Activated CD4-positive, alpha-beta T cell treated with anti-CD3 and anti-CD28 coated beads, Interleukin-2, amount 10 ng/mL, durations not matched to agents 7 days and 5 days (primary cell): ENCODE measurements at regions of chr16 and their contacts with region 1.

Region 1: GRCh38 chr16:17728196-17728595 is 257.4 kb upstream of the XYLT1 start:
- DNase-seq: no peak
- H3K4me3 Mint-ChIP-seq: no peak overlapping the region
- H3K27ac Mint-ChIP-seq: no peak overlapping the region
- H3K4me1 Mint-ChIP-seq: no peaks in the 10 kb centered on the region
- H3K27me3 Mint-ChIP-seq: no peaks in the 10 kb centered on the region

Region 2: DNA sequence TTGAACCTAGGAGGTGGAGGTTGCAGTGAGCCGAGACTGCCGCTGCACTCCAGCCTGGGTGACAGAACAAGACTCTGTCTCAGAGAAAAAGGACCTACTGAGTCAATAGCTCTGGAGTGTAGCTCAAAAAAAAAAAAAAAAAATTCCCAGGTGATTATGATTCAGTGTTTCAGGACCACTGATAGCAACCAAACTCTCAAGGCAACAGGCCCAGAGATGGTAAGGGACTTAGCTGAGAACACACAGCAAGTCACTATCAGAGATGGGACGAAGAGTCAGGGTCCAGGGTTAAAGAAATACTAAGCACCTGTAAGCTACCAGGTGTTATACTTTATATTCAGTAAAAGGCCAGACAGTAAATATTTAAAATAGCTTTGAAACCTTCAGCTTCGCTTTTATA is 592.8 kb before region 1 on chr16:
- CTCF ChIA-PET with region 1: no interaction called
- POLR2A ChIA-PET with region 1: interaction called, 16 read pairs
- DNase-seq: no peak
- H3K4me3 Mint-ChIP-seq: no peak overlapping the region
- H3K27ac Mint-ChIP-seq: no peak overlapping the region
- H3K4me1 Mint-ChIP-seq: peaks cover 12% of the 10 kb centered on the region
- H3K27me3 Mint-ChIP-seq: no peaks in the 10 kb centered on the region

Region 3: DNA sequence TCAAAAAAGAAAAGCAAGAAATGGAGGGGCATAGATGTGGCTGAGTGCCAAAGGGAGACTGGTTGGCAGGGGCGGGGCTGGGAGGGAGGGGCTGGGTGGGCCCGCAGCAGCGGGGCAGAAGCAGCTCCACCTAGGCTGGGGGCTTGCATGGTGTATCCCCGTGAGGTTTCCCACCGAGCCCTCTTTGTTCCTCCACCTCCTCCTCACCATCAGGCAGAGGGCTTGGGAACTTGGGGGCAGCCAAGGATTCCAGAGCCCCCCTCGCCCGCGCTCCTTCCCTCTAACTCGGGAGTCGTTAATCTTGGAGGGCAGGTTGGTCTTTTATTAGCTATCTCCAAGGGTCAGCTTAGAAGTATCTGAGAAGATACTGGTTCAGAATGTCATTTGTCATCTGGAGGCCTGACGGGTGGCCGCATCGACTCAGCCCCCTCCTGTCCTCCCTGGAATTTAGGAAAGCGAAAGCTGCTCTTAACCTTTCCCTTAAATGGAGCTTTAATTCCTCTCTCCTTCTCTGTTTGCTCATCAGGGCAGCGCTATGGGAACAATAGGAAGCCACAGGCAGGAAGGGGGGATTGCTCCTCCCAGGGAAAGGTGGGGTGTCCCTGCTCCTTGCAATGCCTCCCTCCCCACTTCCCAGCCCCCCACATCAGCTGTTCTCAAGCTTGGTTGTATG is 16.8 kb after region 1 on chr16:
- CTCF ChIA-PET with region 1: no interaction called
- POLR2A ChIA-PET with region 1: no interaction called
- DNase-seq: no peak
- H3K4me3 Mint-ChIP-seq: no peak overlapping the region
- H3K27ac Mint-ChIP-seq: no peak overlapping the region
- H3K4me1 Mint-ChIP-seq: no peaks in the 10 kb centered on the region
- H3K27me3 Mint-ChIP-seq: no peaks in the 10 kb centered on the region